ENCODE measurements at regions of chr17 and their contacts with region 1.

Region 1: GRCh38 chr17:34420254-34420766 is 57.3 kb upstream of the CCL1 start:
- DNase-seq: peak; percentile 65 to 89
- H3K4me3 ChIP-seq: no peak overlapping the region
- CTCF ChIP-seq: peak in 1 of 3 donors; percentile 26
- POLR2A ChIP-seq: no peak

Region 2: GRCh38 chr17:34012709-34013375 is 407.5 kb before region 1 on chr17:
- intact Hi-C with region 1: no loop called
- DNase-seq: no peak
- H3K4me3 ChIP-seq: no peak overlapping the region
- CTCF ChIP-seq: no peak
- POLR2A ChIP-seq: no peak

Region 3: DNA sequence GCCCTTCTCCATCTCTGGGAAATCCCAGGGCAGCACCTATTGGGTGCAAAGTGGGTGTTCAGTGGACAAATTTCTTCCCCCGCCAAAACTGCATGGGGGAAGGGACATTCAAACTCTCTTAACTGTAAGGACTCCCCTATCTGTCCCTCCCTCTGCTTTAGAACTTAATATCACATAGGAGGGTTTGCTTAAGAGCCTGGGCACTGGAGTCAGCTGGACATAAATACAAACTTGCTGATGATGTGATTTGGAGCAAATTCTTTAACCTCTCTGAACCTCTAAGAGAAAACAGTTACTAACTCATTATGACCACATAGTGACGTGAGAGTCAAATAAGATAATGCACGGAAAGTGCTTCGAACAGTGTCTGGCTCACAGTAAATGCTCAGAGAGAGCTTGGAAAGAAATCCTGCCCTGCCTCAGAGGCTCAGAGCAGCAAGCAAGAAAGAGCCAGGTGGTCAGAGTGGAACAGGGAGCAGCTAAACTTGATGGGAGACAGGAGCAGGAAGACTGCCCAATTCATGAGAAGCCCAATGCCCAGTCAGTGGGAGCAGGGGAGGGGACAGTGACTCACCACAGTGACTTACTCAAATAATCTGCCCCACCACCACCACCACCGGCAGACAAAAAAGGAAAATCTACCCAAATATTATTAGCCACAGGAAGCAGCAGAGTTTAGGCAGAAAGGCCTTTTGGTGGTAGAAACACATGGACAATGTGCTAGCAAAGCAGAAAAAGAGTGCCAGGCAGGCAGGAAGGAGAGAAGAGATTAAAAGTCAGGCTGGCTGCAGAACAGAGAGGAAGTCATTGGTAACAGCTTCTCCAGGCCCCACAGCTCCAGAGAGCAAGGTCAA is 33.4 kb before region 1 on chr17:
- intact Hi-C with region 1: no loop called
- DNase-seq: no peak
- H3K4me3 ChIP-seq: no peak overlapping the region
- CTCF ChIP-seq: no peak
- POLR2A ChIP-seq: no peak

Region 4: DNA sequence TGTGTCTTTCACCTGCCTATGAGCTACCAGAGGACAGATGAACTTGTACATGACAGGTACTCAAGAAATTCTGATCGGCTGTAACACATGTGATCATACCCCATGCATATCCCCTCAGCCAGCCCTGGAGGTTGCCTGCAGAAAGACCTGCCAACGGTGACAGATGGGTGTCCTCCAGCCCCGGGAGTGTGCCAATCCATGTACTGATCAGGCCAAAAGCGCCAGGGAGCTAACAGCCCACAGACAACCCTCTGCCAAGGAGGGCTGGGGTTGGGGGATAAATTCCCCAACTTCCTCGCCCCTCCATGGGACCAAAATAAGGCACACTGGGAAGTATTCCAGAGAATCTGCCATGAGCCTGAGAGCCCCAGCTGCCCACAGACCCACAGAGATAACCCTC is 351.6 kb after region 1 on chr17:
- intact Hi-C with region 1: no loop called
- DNase-seq: no peak
- H3K4me3 ChIP-seq: no peak overlapping the region
- CTCF ChIP-seq: no peak
- POLR2A ChIP-seq: no peak

Region 5: GRCh38 chr17:35119368-35120165 is 699.3 kb after region 1 on chr17 and contains the start of gene RAD51D:
- intact Hi-C with region 1: loop called (anchors 5 kb)
- DNase-seq: peak in 1 of 2 donors; percentile 95
- H3K4me3 ChIP-seq: peak within 1 kb of the TSS; percentile 90
- CTCF ChIP-seq: peak in 1 of 3 donors; percentile 48
- POLR2A ChIP-seq: no peak
- total RNA-seq, gene RAD51D: 2.8 to 5.9 (median 3.8) TPM

Measured in lower leg skin (tissue), 4 donors.